Colonic mucosa (tissue), 4 donors: ENCODE measurements at regions of chr11 and their contacts with region 1.

Region 1: DNA sequence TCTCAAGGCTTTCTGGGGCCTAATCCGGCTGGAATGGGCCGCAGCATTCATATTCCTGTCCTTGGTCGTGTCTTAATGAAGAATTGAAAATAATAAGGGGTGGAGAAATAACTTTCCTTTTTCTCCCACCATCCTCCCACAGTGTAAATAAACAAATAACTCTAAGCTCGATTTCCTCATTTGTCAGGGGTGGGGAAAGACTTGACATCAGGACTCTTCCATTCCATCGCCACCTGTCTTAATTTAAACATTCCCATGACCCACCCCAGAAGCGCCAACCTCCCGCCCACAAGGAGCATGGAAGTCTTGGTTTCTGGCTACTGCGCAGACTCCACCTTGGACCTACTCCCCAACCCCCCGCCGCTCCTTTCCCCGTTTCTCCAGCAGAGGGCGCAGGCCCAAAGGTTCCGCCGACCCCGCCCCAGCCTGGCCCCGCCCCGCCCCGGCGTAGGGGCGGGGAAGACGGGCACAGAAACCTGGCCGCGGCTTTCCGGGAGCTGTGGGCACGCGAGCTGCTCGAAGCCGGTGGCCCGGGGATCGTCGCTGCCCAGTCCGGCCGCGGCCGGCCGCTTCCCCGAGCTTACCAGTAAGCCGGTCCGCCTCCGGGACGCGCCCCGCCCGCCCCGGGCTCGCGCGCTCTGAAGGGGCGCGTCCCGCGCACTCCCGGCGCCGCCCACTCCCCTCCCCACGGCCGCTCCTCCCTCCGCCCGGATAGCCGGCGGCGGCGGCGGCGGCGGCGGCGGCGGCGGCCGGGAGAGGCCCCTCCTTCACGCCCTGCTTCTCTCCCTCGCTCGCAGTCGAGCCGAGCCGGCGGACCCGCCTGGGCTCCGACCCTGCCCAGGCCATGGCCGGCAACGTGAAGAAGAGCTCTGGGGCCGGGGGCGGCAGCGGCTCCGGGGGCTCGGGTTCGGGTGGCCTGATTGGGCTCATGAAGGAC is at the start of gene CBL:
- DNase-seq: peak; percentile 99
- H3K4me3 ChIP-seq: peak within 1 kb of the TSS; percentile 93
- H3K27ac ChIP-seq: peak within 1 kb of the TSS; percentile 93
- H3K4me1 ChIP-seq: peaks cover 3% of the 10 kb centered on the region
- H3K27me3 ChIP-seq: no peaks in the 10 kb centered on the region
- CTCF ChIP-seq: peak; percentile 89
- total RNA-seq, gene CBL: 10.8 to 16.4 TPM

Region 2: DNA sequence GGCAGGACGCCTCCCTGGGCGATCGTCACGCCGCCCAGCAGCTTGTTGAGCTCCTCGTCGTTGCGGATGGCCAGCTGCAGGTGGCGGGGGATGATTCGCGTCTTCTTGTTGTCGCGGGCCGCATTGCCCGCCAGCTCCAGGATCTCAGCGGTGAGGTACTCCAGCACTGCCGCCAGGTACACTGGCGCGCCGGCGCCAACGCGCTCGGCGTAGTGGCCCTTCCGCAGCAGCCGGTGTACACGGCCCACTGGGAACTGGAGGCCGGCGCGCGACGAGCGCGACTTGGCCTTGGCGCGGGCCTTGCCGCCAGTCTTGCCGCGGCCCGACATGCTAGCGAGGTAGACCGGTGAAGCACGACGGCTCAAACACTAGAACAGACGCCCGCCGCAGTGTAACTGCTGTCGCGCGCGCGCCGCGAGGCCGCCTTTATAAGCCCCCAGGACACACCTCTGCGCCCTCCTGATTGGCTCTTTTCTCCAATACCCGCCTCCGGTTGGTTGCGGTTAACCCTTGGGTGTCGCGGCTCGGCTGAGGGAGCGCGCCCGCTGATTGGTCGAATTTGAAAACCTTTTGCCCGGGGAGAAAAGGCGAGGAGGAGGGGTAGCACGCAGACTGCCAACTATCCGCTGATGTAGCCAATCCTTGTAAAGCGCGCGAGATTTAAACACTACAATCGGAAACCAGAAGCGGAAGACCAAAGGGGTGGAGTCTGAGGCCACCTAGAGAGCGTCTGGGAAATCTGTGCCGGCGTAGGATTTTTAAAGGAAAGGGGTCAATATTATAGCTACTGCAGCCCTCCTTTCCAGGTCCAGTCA is 110.6 kb before region 1 on chr11:
- intact Hi-C with region 1: loop called (anchors 5 kb)
- DNase-seq: peak; percentile 100
- H3K4me3 ChIP-seq: peak overlapping the region; percentile 71
- H3K27ac ChIP-seq: peak overlapping the region; percentile 90
- H3K4me1 ChIP-seq: peaks cover 4% of the 10 kb centered on the region
- H3K27me3 ChIP-seq: no peaks in the 10 kb centered on the region
- CTCF ChIP-seq: no peak

Region 3: GRCh38 chr11:119334174-119334930 is 128.5 kb after region 1 on chr11 and contains the start of gene RNF26:
- intact Hi-C with region 1: loop called (anchors 5 kb)
- DNase-seq: peak; percentile 98
- H3K4me3 ChIP-seq: peak within 1 kb of the TSS; percentile 99
- H3K27ac ChIP-seq: peak within 1 kb of the TSS; percentile 65
- H3K4me1 ChIP-seq: peaks cover 5% of the 10 kb centered on the region
- H3K27me3 ChIP-seq: no peaks in the 10 kb centered on the region
- CTCF ChIP-seq: no peak
- total RNA-seq, gene RNF26: 22.9 to 46.6 TPM